AG04450 (cell line): ENCODE measurements at regions of chr1 and their contacts with region 1.

Region 1: DNA sequence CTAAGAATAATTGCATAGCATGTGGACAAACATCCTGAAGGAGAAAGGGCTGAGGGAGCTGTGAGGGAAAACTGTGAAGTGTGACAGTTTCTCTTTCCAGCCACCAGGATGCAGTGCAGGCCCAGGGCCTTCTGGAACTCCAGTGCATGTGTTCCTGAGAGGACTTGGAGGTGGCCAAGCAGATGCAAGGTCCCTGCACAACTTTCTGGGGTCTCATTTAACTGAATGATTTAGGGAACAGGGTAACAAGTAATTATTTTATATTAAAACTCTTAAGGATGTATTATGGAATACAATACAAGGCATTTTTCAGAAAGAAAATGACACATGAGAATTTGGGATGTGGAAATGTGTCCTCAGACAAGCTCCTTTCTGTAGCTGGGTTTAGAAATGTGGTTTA is 61.2 kb upstream of the MCOLN3 start:
- DNase-seq: peak; percentile 38
- H3K4me3 ChIP-seq: no peak overlapping the region
- H3K27ac ChIP-seq: no peak overlapping the region
- H3K27me3 ChIP-seq: peaks cover 2% of the 10 kb centered on the region
- CTCF ChIP-seq: peak; percentile 94

Region 2: GRCh38 chr1:84907095-84907827 is 202.2 kb before region 1 on chr1:
- CTCF ChIA-PET with region 1: no interaction called
- POLR2A ChIA-PET with region 1: no interaction called
- DNase-seq: no peak
- H3K4me3 ChIP-seq: no peak overlapping the region
- H3K27ac ChIP-seq: no peak overlapping the region
- H3K27me3 ChIP-seq: no peaks in the 10 kb centered on the region
- CTCF ChIP-seq: no peak

Region 3: GRCh38 chr1:85091671-85092280 is 17.7 kb before region 1 on chr1:
- CTCF ChIA-PET with region 1: interaction called, 11 read pairs
- POLR2A ChIA-PET with region 1: no interaction called
- DNase-seq: no peak
- H3K4me3 ChIP-seq: no peak overlapping the region
- H3K27ac ChIP-seq: no peak overlapping the region
- H3K27me3 ChIP-seq: peaks cover 2% of the 10 kb centered on the region
- CTCF ChIP-seq: no peak

Region 4: DNA sequence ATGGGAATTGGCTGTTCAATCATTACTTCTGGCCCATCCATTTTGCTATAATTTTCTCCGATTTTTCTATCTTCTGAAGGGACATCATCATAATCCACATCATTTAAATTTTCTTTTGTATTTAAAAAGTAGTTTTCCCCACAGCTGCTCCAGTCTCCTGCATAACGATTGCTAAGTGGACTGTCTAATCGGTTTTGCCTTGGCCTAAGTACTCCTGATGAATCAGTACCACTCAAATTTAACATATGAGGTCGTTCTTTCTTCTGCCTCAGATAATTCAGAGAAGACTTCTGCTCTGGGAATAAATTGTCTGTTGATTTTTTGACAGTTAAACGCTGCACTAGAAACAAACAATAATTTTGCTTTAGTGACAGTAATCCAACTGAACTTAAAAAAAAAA is 49.4 kb after region 1 on chr1:
- CTCF ChIA-PET with region 1: interaction called, 11 read pairs
- POLR2A ChIA-PET with region 1: no interaction called
- DNase-seq: no peak
- H3K4me3 ChIP-seq: no peak overlapping the region
- H3K27ac ChIP-seq: no peak overlapping the region
- H3K27me3 ChIP-seq: no peaks in the 10 kb centered on the region
- CTCF ChIP-seq: no peak

Region 5: GRCh38 chr1:85240174-85240601 is 130.7 kb after region 1 on chr1:
- CTCF ChIA-PET with region 1: interaction called, 11 read pairs
- POLR2A ChIA-PET with region 1: no interaction called
- DNase-seq: no peak
- H3K4me3 ChIP-seq: no peak overlapping the region
- H3K27ac ChIP-seq: no peak overlapping the region
- H3K27me3 ChIP-seq: no peaks in the 10 kb centered on the region
- CTCF ChIP-seq: no peak

Region 6: GRCh38 chr1:85245456-85245855 is 136.0 kb after region 1 on chr1:
- CTCF ChIA-PET with region 1: interaction called, 12 read pairs
- POLR2A ChIA-PET with region 1: no interaction called
- DNase-seq: no peak
- H3K4me3 ChIP-seq: no peak overlapping the region
- H3K27ac ChIP-seq: no peak overlapping the region
- H3K27me3 ChIP-seq: no peaks in the 10 kb centered on the region
- CTCF ChIP-seq: no peak